ENCODE measurements at regions of chr15 and their contacts with region 1.

Region 1: DNA sequence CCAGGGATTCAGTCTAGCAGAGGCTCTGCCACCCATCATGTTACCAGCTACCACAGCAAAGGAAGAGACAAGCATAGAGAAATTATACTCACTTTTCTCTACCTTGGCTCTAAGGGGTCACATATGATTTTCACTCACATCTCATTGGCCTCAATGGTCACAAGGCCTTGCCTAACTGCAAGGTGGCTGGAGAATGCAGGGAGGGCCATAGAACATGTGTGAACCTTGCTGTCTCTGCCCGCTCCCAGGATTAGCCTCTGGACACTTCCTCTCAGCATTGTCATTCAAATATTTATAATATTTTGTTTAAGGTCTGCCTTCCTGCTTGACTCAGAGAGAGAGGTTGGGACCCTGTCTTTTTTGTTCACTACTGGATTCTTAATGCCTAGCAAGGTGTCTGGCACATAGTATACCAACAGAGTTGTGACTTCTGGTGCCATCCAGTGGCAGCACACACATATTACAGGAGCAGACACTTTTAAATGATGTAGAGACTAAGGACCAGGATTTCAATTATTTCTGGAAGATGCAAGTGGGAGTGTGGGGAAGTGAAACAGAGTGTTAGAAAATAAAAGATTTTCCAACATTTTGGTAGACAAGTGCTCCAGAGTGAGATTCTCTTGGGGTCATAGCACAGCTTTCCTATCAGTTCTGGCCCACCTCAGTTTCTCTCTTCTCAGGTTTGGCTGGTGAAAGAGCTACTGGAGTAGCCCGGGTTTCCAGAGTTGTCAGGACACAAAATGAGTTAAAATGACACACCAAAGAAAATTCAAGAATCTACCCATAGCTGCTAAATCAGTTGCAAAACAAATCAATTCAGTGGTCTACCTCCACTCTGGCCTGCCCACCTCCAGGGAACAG is 119.0 kb upstream of the RASGRP1 start:
- DNase-seq: peak in 1 of 2 experiments; percentile 41
- H3K4me3 ChIP-seq: no peak overlapping the region
- H3K27ac ChIP-seq: no peak overlapping the region
- H3K4me1 ChIP-seq: no peaks in the 10 kb centered on the region
- H3K27me3 ChIP-seq: no peaks in the 10 kb centered on the region
- CTCF ChIP-seq: peak; percentile 77

Region 2: DNA sequence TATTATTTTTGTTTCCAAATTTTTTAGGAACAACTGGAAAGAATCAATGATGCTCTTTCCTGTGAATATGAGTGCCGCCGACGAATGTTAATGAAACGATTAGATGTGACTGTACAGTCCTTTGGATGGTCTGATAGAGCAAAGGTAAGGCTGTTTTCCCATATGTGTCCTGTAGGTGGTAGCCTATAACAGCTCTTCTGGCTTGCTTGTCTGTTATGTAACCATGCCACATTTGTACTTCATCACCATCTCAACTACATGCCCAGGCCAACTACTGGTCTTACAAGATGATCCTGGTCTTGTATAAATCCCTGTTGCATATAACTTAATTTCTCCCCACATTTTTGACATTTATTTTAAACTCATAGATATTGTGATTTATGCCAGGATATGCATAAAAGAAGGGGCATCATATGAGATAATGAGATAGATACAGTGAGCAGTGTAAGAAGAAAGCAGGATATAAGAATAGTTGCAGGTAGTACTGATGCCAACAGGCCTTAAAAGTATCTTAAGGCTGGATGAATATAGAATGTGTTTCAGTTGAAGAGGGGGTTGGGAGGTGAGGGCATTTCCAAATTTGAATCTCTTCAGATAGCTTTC is 209.4 kb before region 1 on chr15:
- CTCF ChIA-PET with region 1: no interaction called
- POLR2A ChIA-PET with region 1: no interaction called
- intact Hi-C with region 1: loop called (anchors 2 kb)
- DNase-seq: peak; percentile 9 to 39
- H3K4me3 ChIP-seq: no peak overlapping the region
- H3K27ac ChIP-seq: no peak overlapping the region
- H3K4me1 ChIP-seq: no peaks in the 10 kb centered on the region
- H3K27me3 ChIP-seq: no peaks in the 10 kb centered on the region
- CTCF ChIP-seq: peak; percentile 73

Region 3: GRCh38 chr15:38828031-38828532 is 144.5 kb after region 1 on chr15:
- CTCF ChIA-PET with region 1: no interaction called
- POLR2A ChIA-PET with region 1: no interaction called
- intact Hi-C with region 1: no loop called
- DNase-seq: no peak
- H3K4me3 ChIP-seq: no peak overlapping the region
- H3K27ac ChIP-seq: no peak overlapping the region
- H3K4me1 ChIP-seq: no peaks in the 10 kb centered on the region
- H3K27me3 ChIP-seq: no peaks in the 10 kb centered on the region
- CTCF ChIP-seq: no peak

Region 4: DNA sequence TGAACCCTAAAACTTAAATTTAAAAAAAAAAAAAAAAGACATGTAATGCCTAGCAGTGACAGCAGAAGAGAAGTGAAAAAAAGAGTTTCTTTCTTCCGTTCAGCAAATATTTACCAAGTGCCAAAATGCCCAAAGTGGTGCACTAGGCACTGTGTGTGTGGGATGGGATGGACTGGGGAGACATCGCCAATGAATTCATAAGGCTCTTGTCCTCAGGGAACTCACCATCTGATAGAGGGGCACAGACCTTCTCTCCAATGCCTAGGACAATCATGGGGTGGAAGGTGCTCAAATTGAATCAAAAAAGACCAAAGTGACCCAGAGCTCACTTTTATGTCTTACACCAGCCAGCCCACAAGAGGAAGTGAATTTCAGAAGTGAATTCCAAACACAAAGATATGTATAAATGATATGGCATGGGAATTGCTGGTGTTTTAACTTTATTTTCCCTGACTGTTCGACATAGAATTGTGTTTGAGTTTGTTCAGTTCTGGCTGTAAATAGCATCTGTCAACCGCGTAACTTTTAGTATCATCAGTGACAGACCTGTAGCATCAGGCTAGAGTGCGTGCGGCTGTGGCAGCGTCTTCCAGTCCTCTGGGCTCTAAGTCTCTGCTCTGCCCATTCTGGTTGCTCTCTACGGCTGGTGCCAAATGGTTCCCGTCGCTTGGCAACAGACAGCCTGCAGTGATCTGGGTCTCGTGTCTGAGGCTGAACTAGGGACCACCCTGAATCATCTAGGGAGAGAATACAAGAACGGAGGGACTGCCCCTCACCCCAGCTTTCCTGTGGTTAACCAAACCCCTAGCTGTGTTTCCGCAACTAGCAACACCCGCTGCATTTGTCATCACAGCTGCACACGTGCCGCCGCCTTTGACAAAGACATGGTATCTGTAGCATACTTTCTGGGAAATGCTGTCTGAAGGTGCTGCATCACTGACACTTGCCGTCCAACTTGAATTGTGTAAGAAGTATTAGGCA is 743.2 kb after region 1 on chr15:
- CTCF ChIA-PET with region 1: no interaction called
- POLR2A ChIA-PET with region 1: no interaction called
- intact Hi-C with region 1: no loop called
- DNase-seq: no peak
- H3K4me3 ChIP-seq: no peak overlapping the region
- H3K27ac ChIP-seq: no peak overlapping the region
- H3K4me1 ChIP-seq: peaks cover 7% of the 10 kb centered on the region
- H3K27me3 ChIP-seq: no peaks in the 10 kb centered on the region
- CTCF ChIP-seq: no peak